B cell (primary cell): ENCODE measurements at regions of chr15 and their contacts with region 1.

Region 1: DNA sequence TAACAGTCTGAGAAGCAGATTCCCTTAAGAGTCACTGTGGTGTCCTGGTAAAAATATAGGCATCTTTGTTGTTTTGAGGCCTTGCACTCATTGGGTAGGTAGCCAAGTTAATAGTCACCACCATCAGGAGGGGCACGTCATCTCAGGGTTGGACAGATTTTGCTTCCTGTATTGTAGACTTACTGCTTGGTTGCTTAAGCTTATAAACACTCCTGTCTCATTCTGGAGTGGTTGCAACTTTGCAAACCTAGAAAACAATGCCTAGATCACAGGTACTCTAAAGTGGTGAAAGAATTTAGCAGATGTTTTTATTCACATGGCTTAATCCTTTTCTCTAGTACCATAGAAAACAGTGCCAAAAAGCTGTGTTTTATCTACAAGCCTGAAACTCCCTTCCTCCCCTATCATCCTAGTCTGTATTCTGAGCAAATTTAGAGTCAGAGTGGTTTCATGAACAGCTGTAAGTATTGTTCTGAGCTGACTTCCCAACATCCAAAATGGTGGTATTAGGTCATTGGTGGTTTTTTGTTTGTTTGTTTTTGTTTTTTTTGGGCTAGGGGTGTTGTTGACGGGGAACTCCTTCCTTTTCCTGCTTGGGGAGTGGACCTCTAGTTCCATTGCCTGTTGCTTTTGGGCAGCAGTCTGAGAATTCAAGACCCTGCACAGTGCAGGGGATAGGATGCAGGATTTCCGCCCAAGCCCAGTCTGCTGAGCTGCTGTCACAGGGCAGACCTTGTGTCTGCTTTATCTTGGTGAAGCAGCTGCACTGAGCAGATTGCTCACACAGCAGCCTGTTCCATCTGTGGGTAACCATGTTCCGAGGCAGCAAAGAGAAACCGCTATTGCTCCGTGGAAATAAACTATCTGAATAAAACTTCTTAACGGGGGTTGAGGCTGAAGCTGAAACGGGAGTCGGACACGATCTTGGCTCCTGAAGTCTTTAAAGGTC is 202.0 kb downstream of the AKAP13 start:
- DNase-seq: peak; percentile 78
- ATAC-seq: peak; percentile 65
- H3K4me3 ChIP-seq: peak overlapping the region; percentile 1 to 42 (median 34)
- H3K4me3 Mint-ChIP-seq: peak overlapping the region; percentile 85
- H3K27ac ChIP-seq: peak overlapping the region; percentile 84 to 94
- H3K27ac Mint-ChIP-seq: peak overlapping the region; percentile 94
- H3K4me1 ChIP-seq: peaks cover 55 to 58% of the 10 kb centered on the region in 2 donors
- H3K4me1 Mint-ChIP-seq: peaks cover 67% of the 10 kb centered on the region
- H3K27me3 ChIP-seq: no peaks in the 10 kb centered on the region
- H3K27me3 Mint-ChIP-seq: no peaks in the 10 kb centered on the region
- CTCF ChIP-seq: no peak

Region 2: GRCh38 chr15:85380217-85380811 is 202.1 kb before region 1 on chr15 and contains the start of gene AKAP13:
- CTCF ChIA-PET with region 1: no interaction called
- POLR2A ChIA-PET with region 1: interaction called, 3 read pairs
- intact Hi-C with region 1: loop called (anchors 1 kb)
- DNase-seq: peak; percentile 97
- ATAC-seq: peak; percentile 78
- H3K4me3 ChIP-seq: peak within 1 kb of the TSS; percentile 65 to 90 (median 69)
- H3K4me3 Mint-ChIP-seq: peak within 1 kb of the TSS; percentile 86
- H3K27ac ChIP-seq: peak within 1 kb of the TSS; percentile 79 to 85
- H3K27ac Mint-ChIP-seq: peak within 1 kb of the TSS; percentile 90
- H3K4me1 ChIP-seq: peaks cover 35 to 42% of the 10 kb centered on the region in 2 donors
- H3K4me1 Mint-ChIP-seq: peaks cover 44% of the 10 kb centered on the region
- H3K27me3 ChIP-seq: peaks cover 0 to 4% (median 0%) of the 10 kb centered on the region in 4 experiments
- H3K27me3 Mint-ChIP-seq: peaks cover 4% of the 10 kb centered on the region
- CTCF ChIP-seq: no peak
- total RNA-seq, gene AKAP13: 358 and 380 TPM in 2 replicates

Region 3: DNA sequence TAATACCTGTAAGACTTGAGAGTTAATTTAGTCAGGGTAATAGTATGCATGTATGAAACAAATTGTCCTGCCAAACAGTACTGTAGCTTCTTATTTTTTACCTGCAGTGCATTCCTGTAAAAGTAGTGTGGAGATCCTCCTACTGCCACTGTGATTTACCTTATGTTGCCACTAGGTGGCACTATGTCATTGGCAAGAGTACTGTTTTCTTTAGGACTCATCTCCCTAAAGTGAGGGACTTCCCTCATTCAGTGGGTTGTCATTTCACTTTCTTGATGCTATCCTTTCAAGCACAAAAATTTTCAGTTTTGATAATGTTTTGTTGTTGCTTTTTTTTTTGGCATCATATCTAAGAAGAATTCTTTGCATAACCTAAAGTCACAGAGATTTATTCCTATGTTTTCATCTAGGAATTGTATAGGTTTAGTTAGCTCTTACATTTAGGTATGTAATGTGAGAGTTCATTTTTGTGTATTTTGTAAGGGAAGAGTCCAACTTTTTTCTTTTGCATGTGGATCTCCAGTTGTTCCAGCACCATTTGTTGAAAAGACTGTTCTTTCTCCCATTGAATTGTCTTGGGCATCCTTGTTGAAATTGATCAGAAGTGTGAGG is 96.3 kb before region 1 on chr15:
- CTCF ChIA-PET with region 1: interaction called, 6 read pairs
- POLR2A ChIA-PET with region 1: no interaction called
- intact Hi-C with region 1: loop called (anchors 5 kb)
- DNase-seq: peak; percentile 83
- ATAC-seq: peak; percentile 91
- H3K4me3 ChIP-seq: no peak overlapping the region
- H3K4me3 Mint-ChIP-seq: no peak overlapping the region
- H3K27ac ChIP-seq: no peak overlapping the region
- H3K27ac Mint-ChIP-seq: peak overlapping the region; percentile 54
- H3K4me1 ChIP-seq: peaks cover 41 to 47% of the 10 kb centered on the region in 2 donors
- H3K4me1 Mint-ChIP-seq: peaks cover 74% of the 10 kb centered on the region
- H3K27me3 ChIP-seq: no peaks in the 10 kb centered on the region
- H3K27me3 Mint-ChIP-seq: no peaks in the 10 kb centered on the region
- CTCF ChIP-seq: peak; percentile 95

Region 4: DNA sequence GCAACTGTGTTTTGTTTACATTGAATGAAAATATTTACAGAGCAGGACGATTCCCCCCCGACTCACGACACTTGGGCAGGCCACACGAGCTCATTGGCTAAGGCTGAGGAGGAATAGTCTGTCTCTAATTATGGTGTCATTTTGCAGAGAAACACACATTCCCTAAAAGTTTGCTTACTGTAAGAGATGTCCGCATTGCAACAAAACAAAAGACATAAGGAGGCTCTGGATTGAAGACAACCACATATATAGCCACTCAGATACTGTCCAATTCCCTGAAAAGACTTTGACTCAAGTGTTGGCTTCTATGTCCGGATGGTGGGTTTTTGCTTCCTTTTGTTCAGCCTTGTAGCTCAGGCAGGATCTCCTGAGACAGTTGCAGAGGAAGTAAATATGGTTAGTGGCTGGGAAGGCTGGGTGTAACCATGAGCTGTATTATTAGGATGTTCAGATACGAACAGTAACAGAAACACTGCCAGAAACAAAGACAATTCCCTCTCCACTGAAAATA is 41.9 kb after region 1 on chr15:
- CTCF ChIA-PET with region 1: interaction called, 3 read pairs
- POLR2A ChIA-PET with region 1: no interaction called
- intact Hi-C with region 1: loop called (anchors 5 kb)
- DNase-seq: no peak
- ATAC-seq: no peak
- H3K4me3 ChIP-seq: no peak overlapping the region
- H3K4me3 Mint-ChIP-seq: peak overlapping the region; percentile 59
- H3K27ac ChIP-seq: peak overlapping the region in 1 of 2 donors; percentile 49
- H3K27ac Mint-ChIP-seq: peak overlapping the region; percentile 74
- H3K4me1 ChIP-seq: peaks cover 28 to 33% of the 10 kb centered on the region in 2 donors
- H3K4me1 Mint-ChIP-seq: peaks cover 50% of the 10 kb centered on the region
- H3K27me3 ChIP-seq: no peaks in the 10 kb centered on the region
- H3K27me3 Mint-ChIP-seq: no peaks in the 10 kb centered on the region
- CTCF ChIP-seq: no peak

Region 5: GRCh38 chr15:85707519-85708338 is 125.3 kb after region 1 on chr15:
- CTCF ChIA-PET with region 1: no interaction called
- POLR2A ChIA-PET with region 1: no interaction called
- intact Hi-C with region 1: loop called (anchors 5 kb)
- DNase-seq: no peak
- ATAC-seq: peak; percentile 37
- H3K4me3 ChIP-seq: peak overlapping the region; percentile 9 to 66 (median 29)
- H3K4me3 Mint-ChIP-seq: peak overlapping the region; percentile 82
- H3K27ac ChIP-seq: peak overlapping the region; percentile 96 to 99
- H3K27ac Mint-ChIP-seq: peak overlapping the region; percentile 96
- H3K4me1 ChIP-seq: peaks cover 51 to 56% of the 10 kb centered on the region in 2 donors
- H3K4me1 Mint-ChIP-seq: peaks cover 71% of the 10 kb centered on the region
- H3K27me3 ChIP-seq: no peaks in the 10 kb centered on the region
- H3K27me3 Mint-ChIP-seq: no peaks in the 10 kb centered on the region
- CTCF ChIP-seq: no peak